ENCODE measurements at regions of chr11 and their contacts with region 1.

Region 1: GRCh38 chr11:3854977-3855807 is at the start of gene STIM1:
- DNase-seq: peak; percentile 95
- H3K4me3 ChIP-seq: peak within 1 kb of the TSS; percentile 97
- H3K27ac ChIP-seq: peak within 1 kb of the TSS; percentile 66
- H3K4me1 ChIP-seq: peaks cover 20% of the 10 kb centered on the region
- H3K27me3 ChIP-seq: no peaks in the 10 kb centered on the region
- CTCF ChIP-seq: peak; percentile 92
- total RNA-seq, gene STIM1: 14.2 and 18.6 TPM in 2 replicates

Region 2: GRCh38 chr11:2752195-2752790 is 1102.9 kb before region 1 on chr11:
- CTCF ChIA-PET with region 1: no interaction called
- POLR2A ChIA-PET with region 1: interaction called, 16 read pairs
- intact Hi-C with region 1: no loop called
- DNase-seq: no peak
- H3K4me3 ChIP-seq: no peak overlapping the region
- H3K27ac ChIP-seq: no peak overlapping the region
- H3K4me1 ChIP-seq: peaks cover 14% of the 10 kb centered on the region
- H3K27me3 ChIP-seq: no peaks in the 10 kb centered on the region
- CTCF ChIP-seq: no peak

Region 3: DNA sequence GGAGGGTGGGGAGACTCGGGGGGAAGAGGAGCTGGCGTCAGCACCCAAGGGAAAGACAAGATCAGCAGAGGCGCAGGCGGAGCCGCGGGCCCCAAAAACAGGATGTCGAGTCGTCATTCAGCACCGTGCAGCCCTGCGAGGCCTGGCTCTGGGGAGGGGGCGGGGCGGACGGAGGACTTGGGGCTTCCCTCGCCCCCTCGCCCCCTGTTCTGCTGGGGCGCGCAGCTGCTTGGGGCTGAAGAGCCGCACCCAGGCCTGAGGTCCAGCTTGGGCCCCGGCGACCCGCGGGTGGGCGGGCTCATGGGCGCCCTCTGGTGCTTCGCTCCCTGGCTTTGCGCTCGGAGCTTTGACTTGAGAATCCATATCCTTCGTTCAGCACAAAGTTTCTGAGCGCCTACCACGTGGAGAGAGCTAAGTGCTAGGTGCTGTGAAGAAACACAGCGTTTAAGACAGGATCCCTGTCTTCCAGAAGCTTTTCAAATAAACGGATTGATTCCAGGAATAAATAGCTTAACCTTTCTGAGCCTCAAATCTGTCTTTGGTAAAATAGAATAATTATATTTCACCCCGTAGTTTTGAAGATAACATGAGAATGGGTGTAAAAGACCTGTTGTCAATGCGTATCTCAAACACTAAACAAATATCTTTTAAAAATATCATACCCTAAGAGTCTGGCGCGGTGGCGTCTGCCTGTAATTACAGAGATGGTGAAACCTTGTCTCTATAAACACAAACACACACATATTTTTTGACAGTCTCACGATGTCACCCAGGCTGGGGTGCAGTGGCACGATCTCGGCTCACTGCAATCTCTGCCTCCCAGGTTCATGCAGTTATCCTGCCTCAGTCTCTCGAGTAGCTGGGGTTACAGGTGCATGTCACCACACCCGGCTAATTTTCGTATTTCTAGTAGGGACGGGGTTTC is 13.5 kb before region 1 on chr11:
- CTCF ChIA-PET with region 1: interaction called, 21 read pairs
- POLR2A ChIA-PET with region 1: no interaction called
- intact Hi-C with region 1: no loop called
- DNase-seq: peak; percentile 84
- H3K4me3 ChIP-seq: peak overlapping the region; percentile 80
- H3K27ac ChIP-seq: peak overlapping the region; percentile 77
- H3K4me1 ChIP-seq: no peaks in the 10 kb centered on the region
- H3K27me3 ChIP-seq: no peaks in the 10 kb centered on the region
- CTCF ChIP-seq: peak; percentile 80

Region 4: DNA sequence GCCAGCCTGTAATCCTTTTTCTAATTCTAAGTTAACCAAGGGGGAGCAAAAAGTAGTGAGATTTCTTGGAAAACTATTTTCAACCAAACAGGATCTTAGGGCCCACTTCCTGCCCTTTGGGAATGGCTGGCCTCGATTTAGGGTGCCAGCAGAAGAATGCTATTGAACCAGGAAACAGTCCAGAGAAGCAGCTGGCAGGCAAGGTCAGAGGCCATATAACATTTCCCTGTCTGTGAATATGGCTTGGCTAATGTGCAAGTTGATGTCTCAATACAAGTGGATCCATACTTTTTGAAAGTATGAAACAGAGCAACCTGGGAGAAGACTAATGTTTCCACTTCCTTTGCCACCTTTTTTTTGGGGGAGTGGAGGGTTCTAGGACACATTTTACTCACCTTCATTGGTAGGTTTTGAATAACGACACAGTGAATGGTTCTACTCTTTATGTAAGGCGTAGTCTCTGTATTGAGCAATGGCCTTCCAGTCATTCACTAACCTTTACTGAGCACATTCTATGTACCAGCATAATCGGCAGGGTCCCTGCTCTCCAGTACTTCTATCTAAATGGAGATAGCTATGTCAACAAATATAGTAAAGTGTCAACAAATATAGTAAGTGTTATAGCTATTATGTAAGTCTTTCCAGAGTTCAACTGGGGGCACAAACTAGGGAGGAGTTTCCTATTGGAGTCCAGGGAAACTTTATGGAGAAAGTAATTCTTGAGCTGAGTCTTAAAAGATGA is 205.2 kb after region 1 on chr11:
- CTCF ChIA-PET with region 1: interaction called, 15 read pairs
- POLR2A ChIA-PET with region 1: no interaction called
- intact Hi-C with region 1: no loop called
- DNase-seq: no peak
- H3K4me3 ChIP-seq: no peak overlapping the region
- H3K27ac ChIP-seq: no peak overlapping the region
- H3K4me1 ChIP-seq: peaks cover 11% of the 10 kb centered on the region
- H3K27me3 ChIP-seq: no peaks in the 10 kb centered on the region
- CTCF ChIP-seq: no peak

Region 5: DNA sequence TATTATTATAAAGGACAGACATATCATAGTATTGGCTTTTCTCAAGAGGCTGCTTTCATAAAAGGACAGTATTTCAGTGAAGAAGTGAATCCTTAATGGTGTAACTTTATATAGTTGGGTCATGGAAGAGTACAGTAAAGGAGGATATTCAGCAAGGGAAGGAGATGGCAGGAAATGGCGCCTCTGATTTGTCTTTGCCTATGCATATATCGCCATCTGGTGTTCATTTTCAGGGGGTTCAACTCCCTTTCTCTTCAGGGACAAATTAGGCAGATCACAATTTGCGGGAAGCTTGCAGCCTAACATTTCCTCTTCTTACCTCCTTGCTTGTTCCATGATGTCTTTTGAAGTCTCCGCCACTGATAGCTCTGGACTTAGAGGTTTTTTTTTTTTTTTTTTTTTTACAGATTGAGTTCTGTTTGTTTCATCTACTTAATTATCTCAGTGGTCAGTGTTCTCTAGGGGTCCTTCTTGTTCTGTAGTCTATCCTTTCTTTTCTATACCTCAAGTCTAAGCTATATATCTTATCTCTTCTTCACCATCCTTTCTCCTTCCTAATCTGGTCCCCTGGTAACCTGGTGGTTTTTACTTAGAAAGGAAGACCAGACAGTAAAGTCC is 217.6 kb after region 1 on chr11:
- CTCF ChIA-PET with region 1: interaction called, 43 read pairs
- POLR2A ChIA-PET with region 1: no interaction called
- intact Hi-C with region 1: loop called (anchors 1 kb)
- DNase-seq: peak; percentile 79
- H3K4me3 ChIP-seq: no peak overlapping the region
- H3K27ac ChIP-seq: no peak overlapping the region
- H3K4me1 ChIP-seq: peaks cover 12% of the 10 kb centered on the region
- H3K27me3 ChIP-seq: no peaks in the 10 kb centered on the region
- CTCF ChIP-seq: peak; percentile 73

Measured in A673 (cell line).